ENCODE measurements at regions of chr14 and their contacts with region 1.

Region 1: DNA sequence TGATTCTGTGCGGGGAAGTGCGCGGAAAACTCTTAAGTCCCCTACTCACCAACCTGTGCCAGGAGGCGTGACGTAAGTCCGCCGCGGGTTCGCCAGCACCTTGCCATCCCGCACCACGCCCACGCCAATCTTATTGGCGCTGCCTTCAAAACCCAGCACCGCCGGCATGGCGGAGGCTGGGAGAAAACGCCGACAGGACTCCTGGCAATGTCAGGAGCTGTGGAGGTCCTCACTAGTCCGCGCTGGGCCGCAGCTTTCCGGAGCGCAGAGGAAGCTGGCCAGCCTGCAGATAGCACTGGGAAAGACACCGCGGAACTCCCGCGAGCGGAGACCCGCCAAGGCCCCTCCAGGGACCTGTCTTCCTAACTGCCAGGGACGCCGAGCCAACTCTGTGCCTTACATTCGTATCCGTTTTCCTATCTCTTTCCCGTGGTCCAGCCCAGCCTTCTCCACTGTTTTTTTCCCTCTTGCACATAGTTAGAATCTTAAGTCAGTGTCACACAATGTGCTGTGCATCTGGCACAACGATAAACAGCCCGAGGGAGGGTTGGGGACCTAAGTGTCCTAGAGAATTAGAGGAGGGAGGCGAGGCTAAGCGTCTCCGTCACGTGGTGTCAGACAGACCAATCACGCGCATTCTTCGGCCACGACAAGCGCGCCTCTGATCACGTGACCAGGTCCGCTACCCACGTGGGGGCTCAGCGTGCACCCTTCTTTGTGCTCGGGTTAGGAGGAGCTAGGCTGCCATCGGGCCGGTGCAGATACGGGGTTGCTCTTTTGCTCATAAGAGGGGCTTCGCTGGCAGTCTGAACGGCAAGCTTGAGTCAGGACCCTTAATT is at the starts of genes APEX1 and OSGEP:
- DNase-seq: peak; percentile 88
- ATAC-seq: peak; percentile 88
- H3K4me3 Mint-ChIP-seq: peak within 1 kb of the TSS; percentile 56
- H3K27ac Mint-ChIP-seq: no peak within 1 kb of the TSS
- H3K4me1 Mint-ChIP-seq: peaks cover 35% of the 10 kb centered on the region
- H3K27me3 Mint-ChIP-seq: no peaks in the 10 kb centered on the region
- CTCF ChIP-seq: no peak
- total RNA-seq, gene APEX1: 215 and 231 TPM in 2 replicates
- total RNA-seq, gene OSGEP: 98.3 and 112 TPM in 2 replicates

Region 2: DNA sequence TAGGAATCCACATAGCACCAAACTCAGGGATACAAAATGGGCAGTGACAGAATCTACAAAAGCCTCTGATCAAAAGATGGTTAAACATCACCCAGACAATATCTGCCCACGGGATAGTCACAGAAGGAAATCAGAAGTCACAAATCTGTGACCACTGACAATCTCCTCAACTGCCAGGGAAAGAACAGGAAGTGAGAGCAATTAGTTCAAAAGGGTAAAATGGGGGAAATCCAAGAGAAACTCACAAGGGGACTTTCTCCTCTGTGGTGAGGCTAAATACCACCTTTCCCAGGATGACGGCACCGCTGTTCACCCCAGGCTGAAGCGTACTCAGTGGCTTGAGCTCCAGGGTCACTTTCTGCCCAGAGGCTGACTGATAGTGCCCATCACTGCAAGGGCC is 159.7 kb before region 1 on chr14:
- CTCF ChIA-PET with region 1: no interaction called
- POLR2A ChIA-PET with region 1: no interaction called
- intact Hi-C with region 1: no loop called
- DNase-seq: no peak
- ATAC-seq: peak; percentile 81
- H3K4me3 Mint-ChIP-seq: no peak overlapping the region
- H3K27ac Mint-ChIP-seq: peak overlapping the region; percentile 50
- H3K4me1 Mint-ChIP-seq: peaks cover 26% of the 10 kb centered on the region
- H3K27me3 Mint-ChIP-seq: no peaks in the 10 kb centered on the region
- CTCF ChIP-seq: no peak

Region 3: GRCh38 chr14:20427231-20428009 is 27.3 kb before region 1 on chr14:
- CTCF ChIA-PET with region 1: no interaction called
- POLR2A ChIA-PET with region 1: interaction called, 11 read pairs
- intact Hi-C with region 1: loop called (anchors 1 kb)
- DNase-seq: no peak
- ATAC-seq: peak; percentile 75
- H3K4me3 Mint-ChIP-seq: peak overlapping the region; percentile 73
- H3K27ac Mint-ChIP-seq: peak overlapping the region; percentile 96
- H3K4me1 Mint-ChIP-seq: peaks cover 57% of the 10 kb centered on the region
- H3K27me3 Mint-ChIP-seq: no peaks in the 10 kb centered on the region
- CTCF ChIP-seq: no peak

Region 4: GRCh38 chr14:20440882-20441281 is 13.9 kb before region 1 on chr14:
- CTCF ChIA-PET with region 1: no interaction called
- POLR2A ChIA-PET with region 1: interaction called, 8 read pairs
- intact Hi-C with region 1: loop called (anchors 1 kb)
- DNase-seq: no peak
- ATAC-seq: peak; percentile 71
- H3K4me3 Mint-ChIP-seq: peak overlapping the region; percentile 28
- H3K27ac Mint-ChIP-seq: peak overlapping the region; percentile 70
- H3K4me1 Mint-ChIP-seq: peaks cover 52% of the 10 kb centered on the region
- H3K27me3 Mint-ChIP-seq: no peaks in the 10 kb centered on the region
- CTCF ChIP-seq: no peak

Region 5: GRCh38 chr14:20469242-20469889 is 14.6 kb after region 1 on chr14 and contains the start of gene PNP:
- CTCF ChIA-PET with region 1: no interaction called
- POLR2A ChIA-PET with region 1: interaction called, 58 read pairs
- intact Hi-C with region 1: loop called (anchors 1 kb)
- DNase-seq: peak; percentile 78
- ATAC-seq: peak; percentile 89
- H3K4me3 Mint-ChIP-seq: peak within 1 kb of the TSS; percentile 95
- H3K27ac Mint-ChIP-seq: peak within 1 kb of the TSS; percentile 93
- H3K4me1 Mint-ChIP-seq: peaks cover 42% of the 10 kb centered on the region
- H3K27me3 Mint-ChIP-seq: no peaks in the 10 kb centered on the region
- CTCF ChIP-seq: no peak
- total RNA-seq, gene PNP: 87.2 and 88.0 TPM in 2 replicates

Region 6: GRCh38 chr14:20477211-20477876 is 22.6 kb after region 1 on chr14:
- CTCF ChIA-PET with region 1: no interaction called
- POLR2A ChIA-PET with region 1: interaction called, 4 read pairs
- intact Hi-C with region 1: loop called (anchors 1 kb)
- DNase-seq: no peak
- ATAC-seq: peak; percentile 80
- H3K4me3 Mint-ChIP-seq: peak overlapping the region; percentile 21
- H3K27ac Mint-ChIP-seq: peak overlapping the region; percentile 89
- H3K4me1 Mint-ChIP-seq: peaks cover 41% of the 10 kb centered on the region
- H3K27me3 Mint-ChIP-seq: no peaks in the 10 kb centered on the region
- CTCF ChIP-seq: no peak

Region 7: GRCh38 chr14:20489093-20489994 is 34.6 kb after region 1 on chr14:
- CTCF ChIA-PET with region 1: no interaction called
- POLR2A ChIA-PET with region 1: interaction called, 20 read pairs
- intact Hi-C with region 1: loop called (anchors 1 kb)
- DNase-seq: no peak
- ATAC-seq: peak; percentile 83
- H3K4me3 Mint-ChIP-seq: peak overlapping the region; percentile 75
- H3K27ac Mint-ChIP-seq: peak overlapping the region; percentile 84
- H3K4me1 Mint-ChIP-seq: peaks cover 70% of the 10 kb centered on the region
- H3K27me3 Mint-ChIP-seq: no peaks in the 10 kb centered on the region
- CTCF ChIP-seq: no peak

Region 8: GRCh38 chr14:21455911-21456667 is 1001.4 kb after region 1 on chr14 and contains the start of gene CHD8:
- CTCF ChIA-PET with region 1: no interaction called
- POLR2A ChIA-PET with region 1: no interaction called
- intact Hi-C with region 1: loop called (anchors 10 kb)
- DNase-seq: peak; percentile 91
- ATAC-seq: peak; percentile 97
- H3K4me3 Mint-ChIP-seq: peak within 1 kb of the TSS; percentile 98
- H3K27ac Mint-ChIP-seq: peak within 1 kb of the TSS; percentile 99
- H3K4me1 Mint-ChIP-seq: peaks cover 34% of the 10 kb centered on the region
- H3K27me3 Mint-ChIP-seq: no peaks in the 10 kb centered on the region
- CTCF ChIP-seq: no peak
- total RNA-seq, gene CHD8: 113 and 133 TPM in 2 replicates